ENCODE measurements at regions of chr17 and their contacts with region 1.

Region 1: DNA sequence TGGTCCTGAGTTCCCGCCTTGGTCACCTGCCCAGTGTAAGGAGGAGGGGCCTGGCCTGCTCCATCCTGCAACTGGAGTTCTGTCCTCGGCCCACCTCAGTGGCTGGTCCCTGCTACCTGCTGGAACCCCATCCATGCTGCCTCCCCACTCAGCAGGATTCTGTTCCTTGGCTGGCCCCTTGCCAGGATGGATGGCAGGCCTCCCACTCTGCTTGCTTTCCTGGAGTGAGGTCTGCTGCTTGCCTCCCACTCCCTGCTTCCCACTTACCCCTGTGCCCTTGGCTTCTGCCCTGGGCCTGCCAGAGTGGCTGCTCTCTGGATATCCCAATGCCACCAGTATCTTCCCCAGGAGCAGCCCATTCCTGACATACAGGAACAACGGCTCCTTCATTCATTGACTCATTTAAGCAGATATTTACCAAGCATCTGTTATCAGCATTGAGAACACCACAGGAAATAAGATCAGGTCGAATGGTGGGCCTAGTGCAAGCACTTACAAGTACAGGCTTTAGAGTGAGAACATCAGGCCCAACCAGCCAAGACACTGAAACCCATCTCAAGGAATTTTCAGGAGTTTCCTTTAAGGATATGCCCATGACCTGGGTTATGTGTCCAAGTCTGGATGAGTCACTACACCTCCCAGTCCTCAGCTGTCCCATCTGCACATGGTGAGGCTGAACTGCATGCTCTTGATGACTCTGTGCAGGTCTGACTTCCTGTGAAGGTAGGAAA is 17.0 kb upstream of the RPRML start:
- DNase-seq: peak; percentile 57
- H3K4me3 ChIP-seq: no peak overlapping the region
- H3K27ac ChIP-seq: no peak overlapping the region
- H3K4me1 ChIP-seq: no peaks in the 10 kb centered on the region
- H3K27me3 ChIP-seq: no peaks in the 10 kb centered on the region
- CTCF ChIP-seq: no peak

Region 2: DNA sequence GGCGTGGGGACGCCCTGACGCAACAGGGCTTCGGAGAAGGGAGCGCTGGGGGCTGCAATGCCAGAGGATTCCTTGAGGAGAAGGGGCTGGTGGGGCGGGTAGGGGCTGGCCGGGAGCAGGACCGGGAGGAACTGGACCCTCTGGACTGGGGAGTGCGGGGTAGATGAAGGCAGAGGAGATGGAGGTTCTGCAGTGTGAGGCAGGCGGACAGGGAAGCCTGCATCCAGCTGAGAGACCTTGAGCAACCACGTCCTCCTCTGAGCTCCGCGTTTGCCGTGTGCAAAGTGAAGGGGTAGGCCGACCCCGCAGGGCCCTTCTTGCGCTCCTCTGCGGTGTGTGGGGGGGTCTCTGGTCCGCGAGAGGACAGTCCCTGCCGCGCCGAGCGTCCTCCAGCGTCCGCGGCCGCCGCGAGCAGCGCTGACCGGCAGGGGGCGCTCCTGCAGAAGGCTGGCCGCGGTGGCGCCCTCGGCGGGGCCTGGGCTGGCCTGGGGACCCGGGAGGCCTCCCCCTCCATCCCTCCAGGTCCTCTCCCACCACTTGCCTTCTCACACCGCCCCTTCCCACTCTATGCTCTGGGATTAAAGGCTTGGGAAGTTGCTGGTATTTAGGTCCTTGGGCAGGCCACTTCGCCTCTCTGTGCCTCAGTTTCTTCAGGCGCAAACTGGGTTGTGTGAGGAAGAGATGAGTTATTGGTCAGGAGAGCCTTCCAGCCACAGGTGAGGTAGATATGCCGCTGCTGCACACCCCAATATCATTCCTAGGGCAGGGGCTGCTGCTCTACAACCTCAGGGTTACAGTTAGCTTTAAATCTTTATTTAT is 154.2 kb before region 1 on chr17:
- CTCF ChIA-PET with region 1: no interaction called
- dilution Hi-C with region 1: no loop called
- in situ Hi-C with region 1: no loop called
- intact Hi-C with region 1: loop called (anchors 1 kb)
- DNase-seq: no peak
- H3K4me3 ChIP-seq: no peak overlapping the region
- H3K27ac ChIP-seq: no peak overlapping the region
- H3K4me1 ChIP-seq: peaks cover 3% of the 10 kb centered on the region
- H3K27me3 ChIP-seq: no peaks in the 10 kb centered on the region
- CTCF ChIP-seq: peak; percentile 50 to 66

Region 3: GRCh38 chr17:46935658-46936266 is 60.2 kb before region 1 on chr17:
- CTCF ChIA-PET with region 1: no interaction called
- dilution Hi-C with region 1: no loop called
- in situ Hi-C with region 1: no loop called
- intact Hi-C with region 1: no loop called
- DNase-seq: no peak
- H3K4me3 ChIP-seq: no peak overlapping the region
- H3K27ac ChIP-seq: no peak overlapping the region
- H3K4me1 ChIP-seq: no peaks in the 10 kb centered on the region
- H3K27me3 ChIP-seq: no peaks in the 10 kb centered on the region
- CTCF ChIP-seq: no peak

Measured in mammary epithelial cell (primary cell).